KBM-7 (cell line): ENCODE measurements at regions of chr6 and their contacts with region 1.

Region 1: DNA sequence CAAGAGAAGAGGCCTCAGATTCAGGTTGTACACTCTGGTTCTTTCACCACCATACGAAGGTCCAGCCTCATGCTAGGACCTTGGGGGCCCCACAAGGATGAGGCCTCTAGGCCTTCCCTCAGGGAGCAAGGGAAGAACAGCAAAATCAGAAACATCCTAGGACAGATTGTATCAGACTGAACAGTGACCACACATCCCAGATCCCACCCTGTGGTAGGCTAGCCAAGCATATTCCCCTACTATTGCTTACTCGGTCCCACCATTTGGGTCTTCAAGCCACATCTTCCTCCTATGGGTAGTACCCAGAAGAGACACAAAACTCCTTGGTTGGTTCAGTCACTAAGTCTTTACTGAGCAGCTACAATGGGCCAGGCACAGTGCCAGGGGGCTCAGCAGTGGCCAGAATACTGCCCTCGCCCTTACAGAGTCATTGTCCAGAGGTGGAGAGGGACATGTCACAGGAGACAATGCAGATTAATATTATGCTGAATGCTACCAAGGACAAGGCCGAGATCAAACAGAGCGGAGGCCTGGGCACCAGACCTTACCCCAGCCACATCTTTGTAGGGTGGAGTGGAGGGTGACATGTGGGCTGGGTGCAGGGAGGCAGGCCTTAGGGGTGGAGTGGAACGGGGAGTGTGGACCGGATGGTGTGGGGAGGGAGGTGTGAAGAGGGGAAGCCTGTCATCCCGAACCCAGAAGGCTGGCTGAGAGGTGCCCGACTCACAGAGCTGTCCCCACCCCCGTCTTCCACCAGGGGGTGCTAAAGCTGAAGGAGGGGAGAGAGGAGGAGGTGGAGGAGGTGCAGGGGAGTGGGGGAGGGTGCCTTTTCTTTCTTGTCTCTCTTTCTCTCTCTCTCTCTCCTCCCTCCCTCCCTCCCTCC is 6.8 kb upstream of the MAPK13 start:
- DNase-seq: peak; percentile 86

Region 2: GRCh38 chr6:36196880-36197548 is 73.5 kb after region 1 on chr6:
- in situ Hi-C with region 1: loop called (anchors 10 kb)
- DNase-seq: peak; percentile 95

Region 3: DNA sequence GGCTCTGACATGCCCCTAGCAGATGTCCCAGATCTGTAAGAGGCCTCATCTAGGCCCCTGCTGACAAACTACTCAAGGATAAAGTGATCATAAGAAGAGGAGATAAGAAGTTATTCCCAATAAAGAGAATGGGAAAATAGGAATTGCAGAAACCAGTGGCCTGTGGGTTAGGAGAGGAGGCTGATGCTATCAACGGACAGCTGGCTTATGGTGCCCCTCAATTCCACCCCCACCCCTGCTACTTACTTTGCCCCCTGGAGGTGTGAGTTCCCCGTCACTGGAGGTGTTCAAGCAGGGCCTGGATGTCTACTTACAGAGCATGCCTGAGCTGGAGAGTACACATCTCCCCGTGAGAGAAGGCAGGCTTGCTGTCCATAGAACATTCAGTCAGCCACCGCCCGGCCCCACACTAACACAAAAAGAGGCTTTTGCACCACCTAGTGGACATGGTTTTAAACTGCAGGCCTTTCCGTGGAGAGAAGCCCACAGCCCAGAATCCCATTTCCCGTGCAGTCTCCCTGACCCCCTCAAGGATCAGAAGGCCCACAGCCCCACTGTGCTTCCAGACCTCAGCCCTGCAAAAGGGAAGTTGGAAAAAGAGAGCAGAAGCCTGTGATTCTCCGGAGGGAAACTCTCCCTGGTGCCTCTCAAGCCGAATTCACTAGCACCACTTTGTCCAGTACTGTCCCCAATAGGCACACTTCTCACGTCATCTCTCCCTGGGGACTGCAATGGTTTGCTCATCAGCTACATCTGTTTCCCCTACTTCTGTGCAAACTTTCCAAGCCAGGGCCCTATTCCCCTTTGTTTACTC is 236.9 kb after region 1 on chr6:
- in situ Hi-C with region 1: loop called (anchors 10 kb)
- DNase-seq: peak; percentile 77

Region 4: DNA sequence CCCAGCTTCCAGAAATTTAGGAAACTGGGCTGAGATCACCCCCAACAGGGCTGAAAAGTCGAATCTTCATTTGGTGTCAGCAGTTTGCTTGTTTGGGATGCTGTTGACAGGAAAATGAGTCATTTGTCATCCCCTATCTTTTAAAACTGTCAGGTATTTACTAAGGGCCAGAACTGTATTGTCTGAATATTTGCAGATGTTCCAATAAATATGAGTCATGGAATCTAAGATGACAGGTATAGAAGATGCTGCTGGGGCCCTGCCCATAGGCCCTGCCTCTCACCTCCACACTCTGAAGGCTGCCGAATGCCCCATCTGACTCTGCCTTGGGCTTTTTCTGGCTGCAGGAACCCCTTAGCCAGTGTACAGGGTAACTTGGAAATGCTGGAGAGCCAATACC is 260.1 kb after region 1 on chr6:
- in situ Hi-C with region 1: no loop called
- DNase-seq: no peak

Region 5: GRCh38 chr6:36576561-36576960 is 453.1 kb after region 1 on chr6:
- in situ Hi-C with region 1: no loop called
- DNase-seq: no peak